A673 (cell line): ENCODE measurements at regions of chr9 and their contacts with region 1.

Region 1: GRCh38 chr9:114108016-114108833 is 9.1 kb upstream of the KIF12 start:
- DNase-seq: peak; percentile 75
- H3K4me3 ChIP-seq: no peak overlapping the region
- H3K27ac ChIP-seq: no peak overlapping the region
- H3K4me1 ChIP-seq: no peaks in the 10 kb centered on the region
- H3K27me3 ChIP-seq: peaks cover 41% of the 10 kb centered on the region
- CTCF ChIP-seq: peak; percentile 93

Region 2: GRCh38 chr9:114131808-114132549 is 23.8 kb after region 1 on chr9:
- CTCF ChIA-PET with region 1: no interaction called
- POLR2A ChIA-PET with region 1: no interaction called
- intact Hi-C with region 1: no loop called
- DNase-seq: no peak
- H3K4me3 ChIP-seq: no peak overlapping the region
- H3K27ac ChIP-seq: no peak overlapping the region
- H3K4me1 ChIP-seq: no peaks in the 10 kb centered on the region
- H3K27me3 ChIP-seq: peaks cover 3% of the 10 kb centered on the region
- CTCF ChIP-seq: no peak

Region 3: DNA sequence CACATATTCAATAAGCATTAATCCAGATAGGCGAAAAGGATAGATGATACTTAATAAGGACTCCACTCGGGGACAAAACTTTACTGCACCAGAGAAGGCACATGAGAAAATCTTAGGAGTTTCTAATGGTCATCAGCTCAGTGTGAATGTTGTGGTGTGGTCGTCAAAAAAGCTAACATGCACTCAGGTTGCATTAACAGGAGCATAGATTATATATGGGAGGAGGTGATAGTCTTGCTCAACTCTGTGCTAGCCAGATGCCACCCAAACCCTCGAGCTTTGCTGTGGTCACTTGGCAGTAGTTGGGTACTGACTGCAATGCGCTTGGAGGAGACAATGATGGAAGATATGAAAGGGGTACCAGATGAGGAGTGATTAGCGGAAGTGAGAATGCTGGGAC is 38.5 kb after region 1 on chr9:
- CTCF ChIA-PET with region 1: no interaction called
- POLR2A ChIA-PET with region 1: no interaction called
- intact Hi-C with region 1: no loop called
- DNase-seq: no peak
- H3K4me3 ChIP-seq: no peak overlapping the region
- H3K27ac ChIP-seq: no peak overlapping the region
- H3K4me1 ChIP-seq: no peaks in the 10 kb centered on the region
- H3K27me3 ChIP-seq: no peaks in the 10 kb centered on the region
- CTCF ChIP-seq: no peak

Region 4: GRCh38 chr9:114163517-114163951 is 55.3 kb after region 1 on chr9:
- CTCF ChIA-PET with region 1: no interaction called
- POLR2A ChIA-PET with region 1: no interaction called
- intact Hi-C with region 1: no loop called
- DNase-seq: no peak
- H3K4me3 ChIP-seq: no peak overlapping the region
- H3K27ac ChIP-seq: no peak overlapping the region
- H3K4me1 ChIP-seq: no peaks in the 10 kb centered on the region
- H3K27me3 ChIP-seq: no peaks in the 10 kb centered on the region
- CTCF ChIP-seq: no peak

Region 5: GRCh38 chr9:114304416-114305188 is 196.4 kb after region 1 on chr9:
- CTCF ChIA-PET with region 1: interaction called, 4 read pairs
- POLR2A ChIA-PET with region 1: no interaction called
- intact Hi-C with region 1: loop called (anchors 1 kb)
- DNase-seq: no peak
- H3K4me3 ChIP-seq: no peak overlapping the region
- H3K27ac ChIP-seq: no peak overlapping the region
- H3K4me1 ChIP-seq: no peaks in the 10 kb centered on the region
- H3K27me3 ChIP-seq: no peaks in the 10 kb centered on the region
- CTCF ChIP-seq: no peak

Region 6: GRCh38 chr9:114619191-114619761 is 511.1 kb after region 1 on chr9:
- CTCF ChIA-PET with region 1: no interaction called
- POLR2A ChIA-PET with region 1: no interaction called
- intact Hi-C with region 1: no loop called
- DNase-seq: no peak
- H3K4me3 ChIP-seq: no peak overlapping the region
- H3K27ac ChIP-seq: no peak overlapping the region
- H3K4me1 ChIP-seq: no peaks in the 10 kb centered on the region
- H3K27me3 ChIP-seq: no peaks in the 10 kb centered on the region
- CTCF ChIP-seq: no peak